Colonic mucosa (tissue), 4 donors: ENCODE measurements at regions of chr2 and their contacts with region 1.

Region 1: DNA sequence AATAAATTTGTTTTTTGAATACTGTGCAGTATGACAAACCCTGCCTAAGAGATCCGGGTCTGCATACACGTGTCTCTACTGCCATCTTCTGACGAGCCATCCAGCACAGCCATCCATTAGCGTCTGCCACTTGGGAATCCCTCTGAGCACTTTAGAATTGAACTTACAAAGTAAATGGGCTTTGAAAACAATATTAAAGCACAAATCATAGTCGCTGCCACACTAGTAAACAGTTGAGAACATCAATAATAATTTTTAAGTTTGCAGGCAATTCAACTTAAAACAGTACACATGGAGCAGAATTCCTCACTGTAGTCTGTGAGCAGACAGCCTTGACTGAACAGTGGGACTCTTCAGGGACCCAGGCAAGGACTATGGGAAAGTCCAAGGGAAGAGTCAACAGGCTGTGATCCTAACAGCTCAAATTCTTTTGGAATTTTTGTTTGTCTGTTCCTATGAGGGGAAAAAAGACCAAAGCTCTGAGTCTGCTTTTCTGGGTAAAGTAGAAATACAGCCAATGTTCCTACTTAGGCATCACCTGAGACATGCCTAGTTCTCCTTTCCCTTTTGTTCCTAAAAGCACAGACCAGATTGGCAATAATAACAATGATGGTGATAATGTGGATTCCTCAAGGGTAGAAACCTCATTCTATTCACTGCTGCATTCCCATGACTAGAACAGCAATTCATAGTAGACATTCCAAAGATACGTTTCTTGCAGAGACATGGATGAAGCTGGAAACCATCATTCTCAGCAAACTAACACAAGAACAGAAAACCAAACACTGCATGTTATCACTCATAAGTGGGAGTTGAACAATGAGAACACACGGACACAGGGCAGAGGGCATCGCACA is 92.9 kb downstream of the MREG start:
- DNase-seq: peak; percentile 78
- H3K4me3 ChIP-seq: no peak overlapping the region
- H3K27ac ChIP-seq: no peak overlapping the region
- H3K4me1 ChIP-seq: no peaks in the 10 kb centered on the region
- H3K27me3 ChIP-seq: no peaks in the 10 kb centered on the region
- CTCF ChIP-seq: peak; percentile 77

Region 2: DNA sequence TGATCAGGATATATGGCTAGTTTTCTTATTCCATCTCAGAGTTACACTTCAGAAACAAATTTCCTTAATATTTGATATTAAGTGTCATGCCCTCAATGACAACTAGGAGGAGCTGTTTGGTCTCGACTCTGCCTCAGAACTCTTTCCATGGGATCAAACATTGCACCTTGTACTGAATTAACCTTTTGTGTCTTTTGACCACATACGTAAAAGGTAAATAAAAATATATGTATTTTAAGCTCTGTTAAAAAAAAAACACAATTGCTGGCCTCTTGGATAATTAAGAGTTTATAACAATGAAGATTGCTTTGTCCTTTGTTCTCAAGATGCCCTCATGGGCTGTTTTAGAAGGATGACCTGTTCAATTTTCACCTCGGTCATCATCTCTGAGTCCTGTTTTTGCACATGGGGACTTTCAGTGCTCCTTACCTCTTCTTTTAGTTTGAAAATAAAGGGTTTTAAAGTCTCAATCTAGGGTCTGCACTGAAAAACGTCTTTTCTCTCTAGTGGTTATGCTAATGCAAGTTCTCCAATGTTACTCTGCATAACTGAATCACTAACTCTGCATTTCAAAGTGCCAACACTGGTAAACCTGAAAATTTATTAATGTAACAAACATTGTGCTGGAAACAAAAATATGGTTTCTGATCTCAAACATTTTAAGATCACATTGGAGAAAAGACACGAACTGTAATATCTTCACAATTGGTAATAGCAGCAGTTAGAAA is 465.8 kb before region 1 on chr2:
- intact Hi-C with region 1: loop called (anchors 5 kb)
- DNase-seq: no peak
- H3K4me3 ChIP-seq: no peak overlapping the region
- H3K27ac ChIP-seq: no peak overlapping the region
- H3K4me1 ChIP-seq: no peaks in the 10 kb centered on the region
- H3K27me3 ChIP-seq: no peaks in the 10 kb centered on the region
- CTCF ChIP-seq: peak; percentile 66

Region 3: GRCh38 chr2:215460682-215461382 is 459.6 kb before region 1 on chr2:
- intact Hi-C with region 1: loop called (anchors 5 kb)
- DNase-seq: no peak
- H3K4me3 ChIP-seq: no peak overlapping the region
- H3K27ac ChIP-seq: no peak overlapping the region
- H3K4me1 ChIP-seq: no peaks in the 10 kb centered on the region
- H3K27me3 ChIP-seq: no peaks in the 10 kb centered on the region
- CTCF ChIP-seq: no peak

Region 4: GRCh38 chr2:215998636-215999035 is 78.2 kb after region 1 on chr2:
- intact Hi-C with region 1: no loop called
- DNase-seq: no peak
- H3K4me3 ChIP-seq: no peak overlapping the region
- H3K27ac ChIP-seq: no peak overlapping the region
- H3K4me1 ChIP-seq: no peaks in the 10 kb centered on the region
- H3K27me3 ChIP-seq: no peaks in the 10 kb centered on the region
- CTCF ChIP-seq: no peak

Region 5: GRCh38 chr2:216066255-216066654 is 145.8 kb after region 1 on chr2:
- intact Hi-C with region 1: no loop called
- DNase-seq: no peak
- H3K4me3 ChIP-seq: no peak overlapping the region
- H3K27ac ChIP-seq: no peak overlapping the region
- H3K4me1 ChIP-seq: no peaks in the 10 kb centered on the region
- H3K27me3 ChIP-seq: no peaks in the 10 kb centered on the region
- CTCF ChIP-seq: no peak